ENCODE measurements at regions of chr22 and their contacts with region 1.

Region 1: GRCh38 chr22:40346178-40347118 is at the start of gene ADSL:
- DNase-seq: peak; percentile 91
- H3K4me3 Mint-ChIP-seq: peak within 1 kb of the TSS; percentile 94
- H3K27ac Mint-ChIP-seq: peak within 1 kb of the TSS; percentile 96
- H3K4me1 Mint-ChIP-seq: peaks cover 46% of the 10 kb centered on the region
- H3K27me3 Mint-ChIP-seq: no peaks in the 10 kb centered on the region
- total RNA-seq, gene ADSL: 125 to 129 TPM

Region 2: DNA sequence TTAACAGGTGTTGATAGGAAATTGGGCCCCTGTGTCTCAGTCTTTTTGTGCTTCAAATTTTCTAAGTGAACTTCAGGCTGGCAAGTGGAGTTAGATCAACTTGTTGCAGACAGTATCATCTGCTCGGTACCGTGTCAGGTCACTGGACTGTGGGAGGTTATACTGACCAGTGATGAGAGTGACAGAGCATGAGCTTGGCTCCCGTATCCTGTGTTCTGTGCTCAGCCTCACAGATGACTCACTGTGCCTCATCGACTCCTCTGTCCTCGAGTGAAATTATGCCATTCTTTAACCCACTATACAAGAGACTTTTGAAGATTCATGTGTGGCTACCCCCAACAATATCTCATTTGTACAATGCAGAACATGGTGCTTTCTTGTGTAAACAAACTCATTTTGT is 437.7 kb before region 1 on chr22:
- CTCF ChIA-PET with region 1: no interaction called
- intact Hi-C with region 1: loop called (anchors 1 kb)
- DNase-seq: peak; percentile 65
- H3K4me3 Mint-ChIP-seq: peak overlapping the region; percentile 90
- H3K27ac Mint-ChIP-seq: peak overlapping the region; percentile 100
- H3K4me1 Mint-ChIP-seq: peaks cover 57% of the 10 kb centered on the region
- H3K27me3 Mint-ChIP-seq: no peaks in the 10 kb centered on the region

Region 3: GRCh38 chr22:40044102-40044869 is 302.2 kb before region 1 on chr22:
- CTCF ChIA-PET with region 1: interaction called, 10 read pairs
- intact Hi-C with region 1: loop called (anchors 1 kb)
- DNase-seq: peak; percentile 99
- H3K4me3 Mint-ChIP-seq: peak overlapping the region; percentile 92
- H3K27ac Mint-ChIP-seq: peak overlapping the region; percentile 99
- H3K4me1 Mint-ChIP-seq: peaks cover 23% of the 10 kb centered on the region
- H3K27me3 Mint-ChIP-seq: no peaks in the 10 kb centered on the region

Region 4: DNA sequence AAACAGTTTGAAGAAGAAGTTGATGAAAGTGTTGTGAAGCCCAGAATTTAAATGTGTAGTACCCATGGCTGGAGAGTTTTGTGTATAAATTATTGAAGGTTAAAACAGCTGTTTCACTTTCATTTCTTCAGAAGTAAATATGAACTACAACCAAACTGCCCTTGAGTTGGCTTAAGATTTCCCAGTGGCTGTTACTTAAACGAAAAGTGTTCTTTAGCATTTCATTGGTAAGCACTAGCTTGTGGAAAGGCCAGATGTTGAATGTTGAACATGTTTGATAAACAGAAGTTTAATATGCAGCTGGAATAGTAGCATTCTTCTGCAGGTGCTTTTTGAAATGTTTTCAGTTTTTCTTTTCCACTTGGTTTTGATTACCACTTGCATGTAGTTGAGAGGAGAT is 252.0 kb before region 1 on chr22:
- CTCF ChIA-PET with region 1: no interaction called
- intact Hi-C with region 1: loop called (anchors 5 kb)
- DNase-seq: no peak
- H3K4me3 Mint-ChIP-seq: peak overlapping the region; percentile 65
- H3K27ac Mint-ChIP-seq: peak overlapping the region; percentile 76
- H3K4me1 Mint-ChIP-seq: peaks cover 67% of the 10 kb centered on the region
- H3K27me3 Mint-ChIP-seq: no peaks in the 10 kb centered on the region

Region 5: GRCh38 chr22:40276996-40277823 is 69.2 kb before region 1 on chr22:
- CTCF ChIA-PET with region 1: interaction called, 6 read pairs
- intact Hi-C with region 1: loop called (anchors 1 kb)
- DNase-seq: no peak
- H3K4me3 Mint-ChIP-seq: no peak overlapping the region
- H3K27ac Mint-ChIP-seq: peak overlapping the region; percentile 93
- H3K4me1 Mint-ChIP-seq: peaks cover 48% of the 10 kb centered on the region
- H3K27me3 Mint-ChIP-seq: no peaks in the 10 kb centered on the region

Region 6: DNA sequence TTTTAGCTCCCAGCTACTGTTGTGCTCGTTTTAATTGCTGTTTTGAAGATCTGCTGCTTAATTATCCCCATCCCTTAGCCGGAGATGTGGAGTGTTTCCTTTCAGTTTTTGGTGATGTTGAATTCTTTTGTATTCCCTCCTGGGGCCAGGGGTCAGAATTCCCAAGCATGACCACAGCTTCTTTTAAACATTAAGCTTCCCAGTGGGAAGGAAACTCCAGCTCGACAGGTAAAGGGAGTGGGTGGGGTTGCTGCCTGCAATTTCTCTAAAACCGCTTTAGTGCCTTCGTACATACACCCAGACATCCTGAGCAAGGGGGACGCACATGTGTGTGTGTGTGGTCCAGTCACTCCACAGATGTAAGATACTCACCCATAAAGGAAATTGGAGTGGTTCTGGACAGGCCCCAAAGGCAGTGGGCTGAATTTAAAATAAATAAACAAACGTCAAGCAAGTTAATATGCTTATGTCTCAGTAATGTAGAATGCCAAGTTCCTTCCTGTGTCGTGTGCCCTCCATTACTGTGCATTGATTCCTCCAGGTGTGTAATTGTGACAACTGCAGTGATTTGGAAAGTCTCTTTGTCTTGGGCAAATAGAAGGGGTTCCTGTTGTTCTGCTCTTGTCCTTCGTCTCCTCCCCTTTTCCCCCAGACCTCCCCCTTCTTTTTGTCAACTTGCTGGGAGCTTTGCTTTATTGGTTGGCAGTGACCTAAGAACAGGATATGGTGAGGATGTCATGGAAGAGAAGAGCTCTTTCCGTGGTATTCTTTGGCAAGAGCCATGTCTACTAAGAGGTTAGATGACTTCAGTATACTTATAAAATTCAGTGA is 19.3 kb before region 1 on chr22:
- CTCF ChIA-PET with region 1: interaction called, 10 read pairs
- intact Hi-C with region 1: loop called (anchors 1 kb)
- DNase-seq: no peak
- H3K4me3 Mint-ChIP-seq: peak overlapping the region; percentile 2
- H3K27ac Mint-ChIP-seq: peak overlapping the region; percentile 68
- H3K4me1 Mint-ChIP-seq: peaks cover 83% of the 10 kb centered on the region
- H3K27me3 Mint-ChIP-seq: no peaks in the 10 kb centered on the region

Measured in activated naive CD4-positive, alpha-beta T cell treated with anti-CD3 and anti-CD28 coated beads for 36 hours (primary cell).